Mammary epithelial cell (primary cell): ENCODE measurements at regions of chr15 and their contacts with region 1.

Region 1: GRCh38 chr15:82999905-83000671 is 11.4 kb downstream of the C15orf40 start:
- DNase-seq: peak; percentile 63
- H3K4me3 ChIP-seq: peak overlapping the region; percentile 15 to 39 (median 38)
- H3K27ac ChIP-seq: no peak overlapping the region
- H3K4me1 ChIP-seq: peaks cover 4% of the 10 kb centered on the region
- H3K27me3 ChIP-seq: no peaks in the 10 kb centered on the region
- CTCF ChIP-seq: peak; percentile 49 to 64

Region 2: GRCh38 chr15:82530606-82531379 is 469.3 kb before region 1 on chr15:
- CTCF ChIA-PET with region 1: interaction called, 5 read pairs
- dilution Hi-C with region 1: no loop called
- in situ Hi-C with region 1: loop called (anchors 10 kb)
- intact Hi-C with region 1: no loop called
- DNase-seq: peak; percentile 74
- H3K4me3 ChIP-seq: peak overlapping the region in 1 of 3 experiments; percentile 46
- H3K27ac ChIP-seq: no peak overlapping the region
- H3K4me1 ChIP-seq: peaks cover 7% of the 10 kb centered on the region
- H3K27me3 ChIP-seq: no peaks in the 10 kb centered on the region
- CTCF ChIP-seq: peak; percentile 67 to 79

Region 3: GRCh38 chr15:82585072-82585471 is 415.0 kb before region 1 on chr15:
- CTCF ChIA-PET with region 1: no interaction called
- dilution Hi-C with region 1: no loop called
- in situ Hi-C with region 1: no loop called
- intact Hi-C with region 1: loop called (anchors 5 kb)
- DNase-seq: peak; percentile 19
- H3K4me3 ChIP-seq: no peak overlapping the region
- H3K27ac ChIP-seq: no peak overlapping the region
- H3K4me1 ChIP-seq: no peaks in the 10 kb centered on the region
- H3K27me3 ChIP-seq: no peaks in the 10 kb centered on the region
- CTCF ChIP-seq: peak in 1 of 2 donors; percentile 24

Region 4: DNA sequence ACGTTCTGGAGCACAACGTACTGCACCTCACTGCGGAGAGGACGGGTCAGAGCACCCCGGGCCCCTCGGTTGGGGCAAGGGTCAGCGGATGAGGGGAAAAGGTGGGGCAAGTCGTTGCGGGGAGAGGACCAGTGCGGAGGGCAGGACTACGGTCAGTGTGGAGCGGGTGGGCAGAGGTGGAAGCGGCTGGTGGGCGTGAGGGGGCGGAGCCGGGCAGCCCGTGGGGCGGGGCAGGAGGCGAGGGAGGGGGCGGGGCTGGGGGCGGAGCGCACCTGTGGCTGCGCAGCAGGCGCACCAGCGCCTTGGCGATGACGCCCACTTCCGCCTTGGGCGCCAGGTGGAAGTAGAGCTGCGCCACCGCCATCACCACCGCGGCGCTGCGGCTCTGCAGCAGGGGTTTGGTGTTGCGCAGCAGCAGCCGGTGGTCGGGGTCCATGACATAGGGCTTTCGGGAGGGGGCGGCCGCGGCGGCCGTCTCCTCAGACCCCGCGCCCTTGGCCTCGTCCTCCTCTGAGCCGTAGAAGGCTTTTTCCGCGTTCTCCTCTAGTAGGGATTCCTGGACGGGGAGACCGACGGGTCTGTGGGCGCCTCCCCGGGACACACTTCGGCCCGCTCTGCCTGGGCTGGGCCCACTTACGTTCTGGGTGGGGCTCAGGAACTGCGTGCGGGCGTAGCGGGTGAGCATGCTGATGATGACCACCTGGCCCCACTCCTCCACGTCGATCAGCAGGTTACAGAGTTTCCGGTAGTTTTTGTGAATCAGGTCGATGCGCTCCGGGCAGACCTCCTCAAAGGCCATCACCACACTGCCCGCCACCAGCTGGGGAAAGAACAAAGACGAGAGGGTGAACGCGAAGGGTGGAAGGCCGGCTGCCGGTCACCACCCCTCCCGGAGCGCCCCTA is 319.6 kb before region 1 on chr15:
- CTCF ChIA-PET with region 1: no interaction called
- dilution Hi-C with region 1: no loop called
- in situ Hi-C with region 1: no loop called
- intact Hi-C with region 1: loop called (anchors 2 kb)
- DNase-seq: peak; percentile 71
- H3K4me3 ChIP-seq: peak overlapping the region; percentile 67 to 80 (median 69)
- H3K27ac ChIP-seq: no peak overlapping the region
- H3K4me1 ChIP-seq: peaks cover 10% of the 10 kb centered on the region
- H3K27me3 ChIP-seq: no peaks in the 10 kb centered on the region
- CTCF ChIP-seq: peak in 1 of 2 donors; percentile 57

Region 5: DNA sequence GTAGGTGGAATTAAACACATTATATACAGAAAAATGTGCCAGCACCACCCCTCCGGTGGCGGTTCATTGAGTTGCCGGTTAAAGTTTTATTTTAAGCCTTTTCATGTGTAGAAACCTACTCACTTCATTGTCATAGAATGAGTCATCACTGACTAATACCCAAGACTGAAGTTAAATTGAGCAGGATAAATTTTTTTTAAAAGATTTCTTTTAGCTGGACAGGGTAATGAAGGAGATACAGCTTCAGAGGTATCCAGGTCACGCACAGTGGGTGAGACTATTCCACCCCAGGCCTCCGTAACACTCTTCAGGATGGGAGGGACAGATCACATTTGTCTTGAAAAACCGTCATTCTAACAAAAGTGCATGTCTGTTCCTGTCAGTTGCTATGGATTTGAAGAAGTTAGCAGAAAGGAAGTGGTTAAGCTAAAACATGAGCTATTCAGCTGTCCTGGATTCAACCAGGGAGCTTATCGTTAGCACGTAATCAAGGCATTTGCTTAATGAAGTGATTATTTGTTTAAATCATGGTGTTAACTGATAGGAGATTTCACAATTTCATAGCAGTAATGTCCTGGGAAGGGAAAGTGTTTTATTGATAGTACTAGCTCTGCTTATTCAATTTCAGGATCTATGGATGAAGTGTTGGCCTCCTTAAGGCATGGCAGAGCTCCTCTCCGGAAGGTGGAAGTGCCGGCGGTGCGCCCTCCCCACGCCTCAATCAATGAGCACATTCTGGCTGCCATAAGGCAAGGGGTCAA is 167.3 kb before region 1 on chr15:
- CTCF ChIA-PET with region 1: no interaction called
- dilution Hi-C with region 1: no loop called
- in situ Hi-C with region 1: no loop called
- intact Hi-C with region 1: loop called (anchors 5 kb)
- DNase-seq: peak; percentile 94
- H3K4me3 ChIP-seq: no peak overlapping the region
- H3K27ac ChIP-seq: peak overlapping the region; percentile 84
- H3K4me1 ChIP-seq: peaks cover 25% of the 10 kb centered on the region
- H3K27me3 ChIP-seq: no peaks in the 10 kb centered on the region
- CTCF ChIP-seq: peak in 1 of 2 donors; percentile 21

Region 6: DNA sequence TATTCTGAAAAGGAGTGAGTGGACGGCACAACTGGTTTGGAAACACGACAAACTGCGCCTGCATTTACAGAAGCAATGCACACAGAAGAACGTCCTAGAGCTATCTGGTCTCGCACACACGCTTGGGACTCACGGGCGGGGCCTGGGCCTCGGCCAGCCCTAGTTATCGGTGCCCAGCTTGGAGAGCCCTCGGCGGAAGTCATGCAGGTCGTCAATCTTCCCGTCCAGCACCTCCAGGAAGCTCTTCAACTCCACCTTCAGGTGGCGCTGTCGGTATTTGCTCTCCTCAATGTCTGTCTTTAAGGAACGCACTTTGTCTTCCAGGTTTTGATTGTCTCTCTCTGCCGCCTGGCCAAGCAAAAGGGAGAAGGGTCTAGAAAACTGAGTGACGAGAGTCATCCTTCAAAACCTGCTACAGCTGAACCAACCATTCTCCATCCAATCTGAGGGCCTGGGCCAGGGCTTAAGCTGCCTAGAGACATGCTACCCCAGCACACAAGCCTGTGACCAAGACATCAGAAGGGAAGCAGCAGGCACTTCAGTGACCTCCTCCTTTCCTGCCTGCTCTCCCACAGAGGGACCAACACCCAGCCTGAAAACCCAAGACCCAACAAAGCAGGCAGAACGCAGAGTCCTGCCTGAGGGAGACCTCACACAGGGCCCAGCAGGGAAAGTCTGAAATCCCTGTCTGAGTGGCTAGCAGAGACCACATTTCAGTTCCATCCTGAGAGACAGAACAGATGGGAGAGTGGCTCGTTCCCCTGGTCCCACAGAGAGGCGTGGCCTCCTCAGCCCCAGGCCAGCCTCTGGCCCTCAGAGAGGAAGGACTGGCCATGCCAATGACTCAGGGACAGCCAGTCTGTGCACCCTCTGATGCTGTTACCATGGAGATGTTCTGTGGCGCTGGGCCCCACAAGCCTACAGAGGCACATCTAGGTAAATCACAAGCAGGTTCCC is 150.3 kb before region 1 on chr15:
- CTCF ChIA-PET with region 1: interaction called, 10 read pairs
- dilution Hi-C with region 1: no loop called
- in situ Hi-C with region 1: loop called in 1 of 2 experiments (anchors 10 kb)
- intact Hi-C with region 1: loop called (anchors 1 kb)
- DNase-seq: peak; percentile 42
- H3K4me3 ChIP-seq: no peak overlapping the region
- H3K27ac ChIP-seq: no peak overlapping the region
- H3K4me1 ChIP-seq: peaks cover under 1% of the 10 kb centered on the region
- H3K27me3 ChIP-seq: no peaks in the 10 kb centered on the region
- CTCF ChIP-seq: peak; percentile 50 to 66

Region 7: DNA sequence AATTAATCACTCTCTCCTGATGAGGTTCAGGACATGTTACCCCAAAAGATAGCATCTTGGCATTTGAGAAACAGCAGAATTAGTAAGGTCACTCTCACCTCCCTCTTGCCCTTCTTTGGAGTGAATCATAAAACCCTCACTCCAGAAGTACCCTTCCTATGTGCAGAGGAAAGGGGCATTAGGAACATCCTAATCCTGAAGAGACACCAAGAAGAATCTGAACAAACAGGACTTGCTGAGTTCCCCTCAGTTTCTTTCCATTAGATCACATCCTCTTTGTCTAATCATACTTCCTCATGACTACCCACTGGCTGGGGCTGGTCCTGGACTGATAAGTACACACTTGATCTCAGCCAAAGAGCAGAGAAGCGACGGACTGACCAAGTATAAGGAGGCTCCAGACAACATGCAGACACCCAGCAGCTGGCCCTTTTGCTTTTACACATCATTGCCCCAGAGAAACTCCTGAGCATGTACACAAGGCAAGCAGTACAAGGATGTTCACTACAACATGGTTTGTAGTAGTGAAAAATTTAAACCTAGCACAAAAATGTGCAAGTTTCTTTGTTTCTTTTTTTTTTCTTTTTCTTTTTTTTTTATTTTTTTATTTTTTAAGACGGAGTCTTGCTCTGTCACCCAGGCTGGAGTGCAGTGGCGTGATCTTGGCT is 92.4 kb after region 1 on chr15:
- CTCF ChIA-PET with region 1: no interaction called
- dilution Hi-C with region 1: no loop called
- in situ Hi-C with region 1: no loop called
- intact Hi-C with region 1: no loop called
- DNase-seq: peak; percentile 27
- H3K4me3 ChIP-seq: no peak overlapping the region
- H3K27ac ChIP-seq: no peak overlapping the region
- H3K4me1 ChIP-seq: no peaks in the 10 kb centered on the region
- H3K27me3 ChIP-seq: no peaks in the 10 kb centered on the region
- CTCF ChIP-seq: no peak

Region 8: GRCh38 chr15:83178869-83179325 is 178.8 kb after region 1 on chr15:
- CTCF ChIA-PET with region 1: no interaction called
- dilution Hi-C with region 1: no loop called
- in situ Hi-C with region 1: no loop called
- intact Hi-C with region 1: no loop called
- DNase-seq: no peak
- H3K4me3 ChIP-seq: no peak overlapping the region
- H3K27ac ChIP-seq: no peak overlapping the region
- H3K4me1 ChIP-seq: no peaks in the 10 kb centered on the region
- H3K27me3 ChIP-seq: no peaks in the 10 kb centered on the region
- CTCF ChIP-seq: no peak